ENCODE measurements at regions of chr5 and their contacts with region 1.

Region 1: GRCh38 chr5:175746851-175747250 is 89.0 kb downstream of the HRH2 start:
- DNase-seq: no peak
- ATAC-seq: peak; percentile 38; the same call in 1 of the 3 replicates
- H3K4me3 ChIP-seq: no peak overlapping the region
- H3K27ac ChIP-seq: no peak overlapping the region
- H3K4me1 ChIP-seq: peaks cover 11% of the 10 kb centered on the region; the same call in 1 of the 2 replicates
- H3K27me3 ChIP-seq: peaks cover 0 to under 1% of the 10 kb centered on the region in 2 experiments; a peak in 1 of 5 replicates
- CTCF ChIP-seq: no peak
- EP300 ChIP-seq: no peak
- POLR2A ChIP-seq: no peak
- RAD21 ChIP-seq: no peak

Region 2: DNA sequence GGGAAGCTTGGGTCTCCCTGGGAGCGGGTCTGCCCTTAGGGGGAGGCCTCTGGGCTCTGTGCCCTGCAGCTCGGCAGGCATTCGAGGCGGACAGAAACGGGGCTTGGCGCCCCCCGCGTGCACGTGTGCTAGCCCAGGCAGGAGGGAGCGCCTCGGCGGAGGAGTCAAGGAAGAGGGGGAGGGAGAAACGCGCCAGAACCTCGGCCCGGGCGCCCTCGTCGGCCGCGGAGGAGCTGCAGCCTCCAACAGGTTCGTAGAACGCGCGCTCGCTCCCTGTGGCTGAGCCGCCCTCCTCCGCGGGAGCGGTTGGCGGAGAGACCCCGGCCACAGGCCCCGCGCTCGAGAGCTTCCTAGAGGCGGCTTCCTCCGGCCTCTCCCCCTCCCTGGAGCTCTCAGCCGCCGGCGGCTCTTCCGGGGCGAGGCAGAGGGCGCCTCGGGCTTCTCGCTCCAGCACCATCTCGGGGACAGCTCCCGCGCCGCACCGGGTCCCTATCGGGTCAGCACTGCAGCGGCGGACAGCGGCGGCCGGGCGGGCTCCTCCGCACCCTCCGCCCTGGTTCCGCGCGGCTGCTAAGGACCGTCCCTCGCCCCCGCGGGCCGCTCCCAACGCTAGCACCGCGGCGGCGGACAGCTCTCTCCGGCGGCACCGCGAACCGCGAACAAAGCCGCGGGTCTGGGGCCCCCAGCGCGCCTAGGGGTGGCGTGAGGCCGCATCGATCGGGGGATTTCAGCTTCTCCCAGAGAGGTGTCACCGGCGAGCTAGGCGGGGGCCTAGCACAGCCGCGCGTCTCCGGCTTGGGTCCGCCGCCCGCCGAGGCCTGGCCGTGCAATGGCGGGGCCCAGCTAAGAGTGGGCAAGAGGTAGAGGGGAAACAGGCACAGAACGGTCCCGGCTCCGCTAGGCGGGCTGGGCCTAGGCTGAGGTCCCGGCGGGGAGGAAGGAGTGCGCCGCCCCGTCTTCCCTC is 50.0 kb after region 1 on chr5:
- CTCF ChIA-PET with region 1: no interaction called
- POLR2A ChIA-PET with region 1: no interaction called
- in situ Hi-C with region 1: no loop called
- intact Hi-C with region 1: loop called (anchors 10 kb)
- DNase-seq: peak; percentile 68
- ATAC-seq: peak; percentile 98
- H3K4me3 ChIP-seq: peak overlapping the region; percentile 47 to 73 (median 50)
- H3K27ac ChIP-seq: no peak overlapping the region
- H3K4me1 ChIP-seq: peaks cover 18% of the 10 kb centered on the region
- H3K27me3 ChIP-seq: peaks cover 0 to 7% of the 10 kb centered on the region in 2 experiments; a peak in 1 of 5 replicates
- CTCF ChIP-seq: peak; percentile 57
- EP300 ChIP-seq: peak in 1 of 2 experiments; percentile 32; a peak in 1 of 4 replicates
- POLR2A ChIP-seq: no peak
- RAD21 ChIP-seq: peak; percentile 91

Measured in HepG2 (cell line).